Stomach (tissue), 19 donors: ENCODE measurements at regions of chr21 and their contacts with region 1.

Region 1: DNA sequence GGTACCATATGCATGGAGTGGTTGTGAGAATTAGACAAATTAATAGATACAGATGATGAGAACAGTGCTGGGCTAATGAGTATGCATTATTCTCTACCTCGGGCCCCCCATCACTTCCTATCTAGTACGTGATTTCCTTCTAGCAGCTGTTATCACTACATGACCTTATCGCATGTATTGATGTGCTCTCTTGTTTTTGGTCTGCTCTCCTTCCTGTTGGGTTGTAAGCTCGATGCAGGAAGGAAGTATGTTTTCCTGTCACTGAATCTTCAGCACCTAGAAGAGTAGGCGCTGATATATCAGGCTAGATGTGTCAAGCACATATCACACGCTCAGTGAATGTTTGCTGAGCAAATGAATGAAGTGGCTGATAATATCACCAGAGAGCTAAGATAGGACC is 43.9 kb upstream of the IFNAR2 start:
- DNase-seq: peak in 1 of 2 donors; percentile 25
- H3K4me3 ChIP-seq: no peak overlapping the region
- H3K27ac ChIP-seq: peak overlapping the region in 1 of 5 donors; percentile 12
- H3K4me1 ChIP-seq: peaks cover 0 to 7% (median 0%) of the 10 kb centered on the region in 4 donors
- H3K27me3 ChIP-seq: peaks cover 0 to 36% (median 0%) of the 10 kb centered on the region in 3 donors
- CTCF ChIP-seq: no peak
- EP300 ChIP-seq: no peak
- POLR2A ChIP-seq: no peak

Region 2: GRCh38 chr21:32834916-32835235 is 351.0 kb before region 1 on chr21:
- intact Hi-C with region 1: loop called (anchors 10 kb)
- DNase-seq: no peak
- H3K4me3 ChIP-seq: no peak overlapping the region
- H3K27ac ChIP-seq: no peak overlapping the region
- H3K4me1 ChIP-seq: peaks cover 0 to 4% (median 0%) of the 10 kb centered on the region in 4 donors
- H3K27me3 ChIP-seq: peaks cover 0 to 15% (median 0%) of the 10 kb centered on the region in 3 donors
- CTCF ChIP-seq: no peak
- EP300 ChIP-seq: no peak
- POLR2A ChIP-seq: no peak